Mammary epithelial cell (primary cell): ENCODE measurements at regions of chr2 and their contacts with region 1.

Region 1: DNA sequence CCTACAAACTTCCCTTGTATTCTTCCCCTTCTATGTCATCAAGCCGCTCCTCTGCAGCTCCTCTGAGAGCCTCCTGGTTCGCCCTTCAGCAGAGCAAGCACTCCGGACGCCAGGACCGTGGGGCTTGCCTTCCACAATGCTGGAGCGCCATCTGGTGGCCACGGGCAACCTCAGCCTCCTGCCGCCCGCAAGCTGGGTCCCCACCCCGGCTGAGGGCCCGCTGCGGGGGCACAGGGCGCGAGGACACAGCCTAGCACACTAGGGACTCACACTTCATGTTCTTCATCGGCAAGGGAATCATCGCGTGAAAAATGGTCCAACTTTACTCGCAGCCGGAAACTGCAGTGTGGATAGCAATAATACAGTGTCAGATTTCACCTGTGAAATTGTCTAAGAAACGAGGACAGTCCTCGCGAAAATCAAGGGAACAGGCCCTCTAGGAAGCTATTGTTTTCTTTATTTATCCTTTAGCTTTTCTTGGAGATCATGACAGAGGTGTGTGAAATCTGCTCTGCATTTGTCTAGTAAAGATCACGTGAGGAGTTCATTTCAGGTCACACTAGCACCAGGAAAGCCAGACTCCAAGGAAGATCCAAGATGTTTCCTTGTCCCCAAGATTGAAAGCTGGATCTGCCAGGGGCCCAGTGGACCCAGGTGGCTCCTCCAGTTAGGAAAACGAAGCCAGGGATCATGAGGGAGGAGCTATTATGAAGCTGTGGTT is 5.8 kb downstream of the PRLH start:
- DNase-seq: peak; percentile 68
- H3K4me3 ChIP-seq: no peak overlapping the region
- H3K27ac ChIP-seq: no peak overlapping the region
- H3K4me1 ChIP-seq: peaks cover 25% of the 10 kb centered on the region
- H3K27me3 ChIP-seq: no peaks in the 10 kb centered on the region
- CTCF ChIP-seq: peak; percentile 76 to 97

Region 2: DNA sequence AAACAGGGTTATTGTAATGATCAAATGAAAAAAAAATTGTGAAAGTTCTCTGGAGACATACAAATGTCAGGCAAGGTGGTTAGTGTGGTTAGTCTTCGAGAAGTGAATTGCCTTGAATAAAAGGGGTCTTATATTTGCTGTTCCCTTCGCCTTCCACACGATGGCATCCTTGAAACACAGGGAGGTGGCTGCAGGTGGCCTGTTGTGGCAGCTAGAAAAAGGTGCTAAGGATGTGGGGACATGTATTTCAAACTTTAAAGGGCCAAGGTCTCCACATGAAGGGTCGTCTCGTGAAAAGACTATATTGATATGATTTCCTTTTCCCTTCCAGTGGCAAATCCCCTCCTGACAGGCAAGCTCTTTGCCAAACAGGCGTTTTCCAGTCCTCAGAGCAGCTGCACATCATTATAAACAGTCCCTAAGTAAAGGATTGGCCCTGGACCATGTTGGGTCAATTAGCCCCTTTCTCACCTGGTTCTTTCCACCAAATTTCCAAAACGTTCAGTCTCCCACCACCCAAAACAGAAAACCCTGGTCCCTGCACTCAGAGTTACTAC is 418.0 kb before region 1 on chr2:
- CTCF ChIA-PET with region 1: no interaction called
- dilution Hi-C with region 1: no loop called
- in situ Hi-C with region 1: loop called (anchors 25 kb)
- intact Hi-C with region 1: loop called (anchors 1 kb)
- DNase-seq: peak; percentile 37
- H3K4me3 ChIP-seq: no peak overlapping the region
- H3K27ac ChIP-seq: no peak overlapping the region
- H3K4me1 ChIP-seq: peaks cover 9% of the 10 kb centered on the region
- H3K27me3 ChIP-seq: no peaks in the 10 kb centered on the region
- CTCF ChIP-seq: peak; percentile 64 to 67

Region 3: GRCh38 chr2:237184192-237184926 is 387.8 kb before region 1 on chr2:
- CTCF ChIA-PET with region 1: interaction called, 16 read pairs
- dilution Hi-C with region 1: no loop called
- in situ Hi-C with region 1: no loop called
- intact Hi-C with region 1: no loop called
- DNase-seq: peak; percentile 26
- H3K4me3 ChIP-seq: no peak overlapping the region
- H3K27ac ChIP-seq: no peak overlapping the region
- H3K4me1 ChIP-seq: no peaks in the 10 kb centered on the region
- H3K27me3 ChIP-seq: peaks cover 2% of the 10 kb centered on the region
- CTCF ChIP-seq: no peak

Region 4: DNA sequence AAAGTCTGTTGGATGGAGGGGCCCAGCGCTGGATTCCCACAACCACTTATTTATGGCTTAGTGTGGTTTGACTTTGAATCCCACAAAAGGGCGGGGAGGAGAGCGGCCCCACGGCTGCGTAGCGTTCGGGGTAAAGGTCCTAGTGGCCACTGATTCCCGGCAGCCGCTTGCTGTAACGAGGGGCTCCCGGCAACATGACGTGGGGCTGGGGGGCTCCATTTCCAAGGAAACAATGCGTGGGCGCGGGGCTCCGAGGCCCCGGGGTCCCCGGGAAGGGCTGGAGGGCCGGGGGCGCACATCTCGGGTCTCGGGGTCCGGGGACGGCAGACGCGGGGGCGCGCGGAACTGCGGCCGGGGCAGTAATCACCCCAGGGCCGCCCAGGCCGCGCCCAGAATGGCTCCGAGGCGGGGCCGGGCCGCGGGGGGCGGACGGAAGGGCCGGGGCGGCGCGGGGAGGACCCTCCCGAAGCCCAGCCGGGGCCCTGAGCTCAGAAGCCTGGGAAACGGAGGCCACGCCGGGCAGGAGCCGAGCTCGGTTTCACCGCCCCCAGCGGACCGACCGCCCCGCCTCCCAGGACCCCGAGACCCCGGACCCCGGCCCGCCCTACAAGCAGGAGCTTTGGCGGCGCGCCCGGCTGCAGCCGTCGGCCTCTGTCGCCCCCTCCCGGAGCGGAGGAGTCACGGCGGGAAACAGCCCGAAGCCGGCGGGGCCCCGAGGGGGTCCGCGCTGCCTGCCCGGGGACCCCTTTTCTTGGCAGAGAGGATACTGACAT is 97.1 kb before region 1 on chr2:
- CTCF ChIA-PET with region 1: interaction called, 4 read pairs
- dilution Hi-C with region 1: no loop called
- in situ Hi-C with region 1: no loop called
- intact Hi-C with region 1: loop called (anchors 1 kb)
- DNase-seq: peak; percentile 48
- H3K4me3 ChIP-seq: peak overlapping the region; percentile 49 to 64 (median 51)
- H3K27ac ChIP-seq: peak overlapping the region; percentile 70
- H3K4me1 ChIP-seq: peaks cover 20% of the 10 kb centered on the region
- H3K27me3 ChIP-seq: no peaks in the 10 kb centered on the region
- CTCF ChIP-seq: peak; percentile 43 to 96

Region 5: DNA sequence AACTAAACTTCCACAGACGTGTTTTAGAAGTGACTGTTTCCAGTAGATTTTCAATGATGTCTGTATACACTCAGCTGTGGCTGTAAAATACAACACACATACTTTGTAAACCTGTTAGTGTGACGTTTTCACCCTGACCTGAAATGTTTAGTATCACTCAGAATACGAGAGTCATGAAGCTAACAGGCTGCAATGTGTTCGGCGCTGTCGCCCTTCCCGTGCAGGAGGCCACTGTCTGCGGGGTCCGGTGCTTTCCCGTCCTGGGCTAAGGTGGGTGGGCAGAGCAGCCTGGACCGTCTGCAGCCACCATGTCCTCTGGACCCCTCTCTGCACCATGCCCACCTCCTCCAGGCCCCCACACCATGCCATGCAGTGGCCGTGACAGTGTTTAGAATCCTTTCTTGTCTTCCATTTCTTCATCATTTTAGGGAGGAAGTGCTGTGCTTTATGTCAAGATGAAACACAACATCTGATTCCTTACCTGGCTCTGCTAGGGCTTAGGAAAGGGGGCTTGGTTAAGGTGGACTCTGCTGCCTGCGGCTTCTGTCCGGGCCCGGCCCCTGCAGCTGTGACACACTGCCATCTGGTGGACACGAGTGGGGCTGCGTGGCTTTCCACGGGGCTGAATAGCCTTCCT is 172.6 kb after region 1 on chr2:
- CTCF ChIA-PET with region 1: no interaction called
- dilution Hi-C with region 1: no loop called
- in situ Hi-C with region 1: loop called in 1 of 2 experiments (anchors 25 kb)
- intact Hi-C with region 1: loop called (anchors 2 kb)
- DNase-seq: peak; percentile 32
- H3K4me3 ChIP-seq: no peak overlapping the region
- H3K27ac ChIP-seq: no peak overlapping the region
- H3K4me1 ChIP-seq: no peaks in the 10 kb centered on the region
- H3K27me3 ChIP-seq: no peaks in the 10 kb centered on the region
- CTCF ChIP-seq: peak; percentile 94 to 98

Region 6: GRCh38 chr2:237966565-237967462 is 394.6 kb after region 1 on chr2 and contains the start of gene UBE2F:
- CTCF ChIA-PET with region 1: no interaction called
- dilution Hi-C with region 1: no loop called
- in situ Hi-C with region 1: no loop called
- intact Hi-C with region 1: no loop called
- DNase-seq: peak; percentile 94
- H3K4me3 ChIP-seq: peak within 1 kb of the TSS; percentile 40 to 95 (median 88)
- H3K27ac ChIP-seq: no peak within 1 kb of the TSS
- H3K4me1 ChIP-seq: peaks cover 14% of the 10 kb centered on the region
- H3K27me3 ChIP-seq: no peaks in the 10 kb centered on the region
- CTCF ChIP-seq: no peak
- total RNA-seq, gene UBE2F: 41.5 to 69.3 TPM